ENCODE measurements at regions of chr2 and their contacts with region 1.

Region 1: GRCh38 chr2:208595386-208596275 is 189.0 kb downstream of the PTH2R start:
- DNase-seq: no peak
- ATAC-seq: no peak
- H3K4me3 ChIP-seq: no peak overlapping the region
- H3K27ac ChIP-seq: no peak overlapping the region
- H3K4me1 ChIP-seq: no peaks in the 10 kb centered on the region
- H3K27me3 ChIP-seq: peaks cover 0 to 3% (median 0%) of the 10 kb centered on the region in 7 donors
- CTCF ChIP-seq: no peak

Region 2: DNA sequence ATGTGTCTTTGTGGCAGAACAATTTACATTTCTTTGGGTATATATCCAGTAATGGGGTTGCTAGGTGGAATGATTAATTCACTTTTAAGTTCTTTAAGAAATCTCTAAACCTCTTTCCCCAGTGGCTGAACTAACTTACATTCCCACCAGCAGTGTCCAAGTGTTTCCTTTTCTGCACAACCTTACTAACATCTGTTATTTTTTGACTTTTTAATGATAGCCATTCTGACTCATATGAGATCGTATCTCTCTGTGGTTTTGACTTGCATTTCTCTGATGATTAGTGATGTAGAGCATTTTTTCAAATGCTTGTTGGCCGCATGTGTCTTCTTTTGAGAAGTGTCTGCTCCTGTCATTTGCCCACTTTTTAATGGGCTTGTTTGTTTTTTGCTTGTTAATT is 232.1 kb before region 1 on chr2:
- intact Hi-C with region 1: no loop called
- DNase-seq: no peak
- ATAC-seq: no peak
- H3K4me3 ChIP-seq: no peak overlapping the region
- H3K27ac ChIP-seq: no peak overlapping the region
- H3K4me1 ChIP-seq: peaks cover 0 to 10% (median 0%) of the 10 kb centered on the region in 9 donors
- H3K27me3 ChIP-seq: no peaks in the 10 kb centered on the region
- CTCF ChIP-seq: no peak

Region 3: DNA sequence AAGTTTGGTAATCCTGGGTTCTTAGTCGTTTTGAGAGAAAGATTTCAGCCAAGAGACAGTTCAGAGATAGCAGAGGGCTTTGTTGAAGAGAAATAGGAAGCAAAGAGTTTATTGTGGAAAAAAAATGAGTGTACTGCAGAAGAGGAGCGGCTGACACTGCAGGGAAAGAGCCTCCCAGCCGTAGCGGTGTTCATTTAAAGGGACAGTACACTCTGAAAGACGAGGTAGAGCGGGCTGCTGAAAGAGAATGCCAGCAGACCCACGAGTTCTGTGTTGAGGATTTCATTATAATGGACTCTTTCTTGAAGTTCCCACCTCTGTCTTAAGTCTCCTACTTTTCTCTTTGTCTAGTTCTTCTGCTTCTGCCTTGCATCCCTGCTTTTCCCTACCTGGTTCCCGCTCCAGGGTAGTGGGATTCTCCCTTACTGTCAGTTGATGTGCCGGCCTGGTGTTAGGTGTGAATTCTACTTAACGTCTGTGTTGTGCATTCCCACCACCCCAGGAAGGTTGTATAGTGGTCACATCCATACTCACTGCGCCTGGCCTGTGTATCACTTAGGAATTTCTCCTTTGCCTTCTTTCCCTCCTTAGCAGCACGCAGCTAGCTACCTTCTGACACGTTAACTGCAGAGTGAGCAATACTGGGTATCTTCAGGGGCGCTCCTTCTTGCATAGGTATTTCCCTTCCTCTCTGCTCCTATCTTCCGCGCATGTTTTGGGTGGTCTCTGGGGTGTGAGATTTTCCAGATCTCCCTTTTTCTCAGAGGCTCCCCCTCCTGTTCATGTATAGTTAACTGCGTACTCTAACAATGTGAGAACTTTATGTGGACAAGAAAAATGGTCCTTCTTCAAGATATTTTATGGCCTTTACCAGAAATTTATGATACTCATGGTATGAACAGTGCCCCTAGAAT is 24.5 kb before region 1 on chr2:
- intact Hi-C with region 1: loop called in 1 of 10 experiments (anchors 1 kb)
- DNase-seq: no peak
- ATAC-seq: no peak
- H3K4me3 ChIP-seq: no peak overlapping the region
- H3K27ac ChIP-seq: no peak overlapping the region
- H3K4me1 ChIP-seq: no peaks in the 10 kb centered on the region
- H3K27me3 ChIP-seq: peaks cover 0 to 14% (median 5%) of the 10 kb centered on the region in 7 donors
- CTCF ChIP-seq: no peak